ENCODE measurements at regions of chr1 and their contacts with region 1.

Region 1: GRCh38 chr1:70509996-70510876 is 99.2 kb downstream of the CTH start:
- DNase-seq: no peak
- ATAC-seq: no peak
- H3K4me3 Mint-ChIP-seq: no peak overlapping the region
- H3K27ac Mint-ChIP-seq: no peak overlapping the region
- H3K4me1 Mint-ChIP-seq: no peaks in the 10 kb centered on the region
- H3K27me3 Mint-ChIP-seq: peaks cover 13% of the 10 kb centered on the region
- CTCF ChIP-seq: no peak

Region 2: DNA sequence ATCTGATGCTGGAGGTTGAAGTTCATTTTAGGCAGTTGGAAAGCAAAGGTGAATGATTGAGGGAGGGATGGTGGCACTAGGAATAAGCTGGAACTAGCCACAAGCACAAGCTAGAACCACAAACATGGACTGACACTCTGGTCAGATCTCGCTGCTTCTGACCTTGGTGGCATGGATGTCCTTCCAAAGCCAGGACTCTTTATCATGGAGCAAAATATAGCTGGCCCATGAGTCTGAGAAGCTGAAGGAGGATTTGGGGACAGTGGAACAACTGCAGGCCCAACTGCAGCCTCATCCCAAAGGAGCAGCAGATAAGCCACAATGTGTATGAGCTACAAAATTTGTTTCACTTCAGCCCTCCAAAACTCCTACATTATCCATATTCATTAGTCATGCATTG is 253.6 kb before region 1 on chr1:
- CTCF ChIA-PET with region 1: no interaction called
- POLR2A ChIA-PET with region 1: no interaction called
- intact Hi-C with region 1: loop called (anchors 10 kb)
- DNase-seq: no peak
- ATAC-seq: no peak
- H3K4me3 Mint-ChIP-seq: no peak overlapping the region
- H3K27ac Mint-ChIP-seq: no peak overlapping the region
- H3K4me1 Mint-ChIP-seq: no peaks in the 10 kb centered on the region
- H3K27me3 Mint-ChIP-seq: no peaks in the 10 kb centered on the region
- CTCF ChIP-seq: no peak

Region 3: GRCh38 chr1:70440642-70441378 is 69.4 kb before region 1 on chr1:
- CTCF ChIA-PET with region 1: no interaction called
- POLR2A ChIA-PET with region 1: no interaction called
- intact Hi-C with region 1: no loop called
- DNase-seq: no peak
- ATAC-seq: no peak
- H3K4me3 Mint-ChIP-seq: no peak overlapping the region
- H3K27ac Mint-ChIP-seq: no peak overlapping the region
- H3K4me1 Mint-ChIP-seq: no peaks in the 10 kb centered on the region
- H3K27me3 Mint-ChIP-seq: no peaks in the 10 kb centered on the region
- CTCF ChIP-seq: no peak

Region 4: DNA sequence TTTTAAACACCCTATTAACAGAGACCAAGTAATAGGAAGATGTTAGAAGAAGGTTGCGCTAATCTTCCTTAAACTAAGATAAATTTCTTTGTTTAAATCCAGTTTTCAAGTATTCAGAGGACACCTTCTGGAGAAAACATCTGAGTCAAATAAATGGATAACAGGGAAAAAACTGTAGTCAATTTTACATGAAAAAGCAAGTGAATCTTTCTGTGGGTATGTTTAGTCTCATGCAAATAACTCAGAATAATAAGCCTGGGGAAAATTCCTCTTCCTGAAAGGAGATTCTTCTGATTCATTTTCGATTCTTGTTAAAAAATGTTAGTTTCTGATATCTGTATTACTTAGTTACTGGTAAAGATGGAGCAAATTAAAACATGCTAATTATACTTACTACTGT is 46.3 kb after region 1 on chr1:
- CTCF ChIA-PET with region 1: no interaction called
- POLR2A ChIA-PET with region 1: no interaction called
- intact Hi-C with region 1: no loop called
- DNase-seq: no peak
- ATAC-seq: no peak
- H3K4me3 Mint-ChIP-seq: no peak overlapping the region
- H3K27ac Mint-ChIP-seq: no peak overlapping the region
- H3K4me1 Mint-ChIP-seq: no peaks in the 10 kb centered on the region
- H3K27me3 Mint-ChIP-seq: no peaks in the 10 kb centered on the region
- CTCF ChIP-seq: no peak

Region 5: DNA sequence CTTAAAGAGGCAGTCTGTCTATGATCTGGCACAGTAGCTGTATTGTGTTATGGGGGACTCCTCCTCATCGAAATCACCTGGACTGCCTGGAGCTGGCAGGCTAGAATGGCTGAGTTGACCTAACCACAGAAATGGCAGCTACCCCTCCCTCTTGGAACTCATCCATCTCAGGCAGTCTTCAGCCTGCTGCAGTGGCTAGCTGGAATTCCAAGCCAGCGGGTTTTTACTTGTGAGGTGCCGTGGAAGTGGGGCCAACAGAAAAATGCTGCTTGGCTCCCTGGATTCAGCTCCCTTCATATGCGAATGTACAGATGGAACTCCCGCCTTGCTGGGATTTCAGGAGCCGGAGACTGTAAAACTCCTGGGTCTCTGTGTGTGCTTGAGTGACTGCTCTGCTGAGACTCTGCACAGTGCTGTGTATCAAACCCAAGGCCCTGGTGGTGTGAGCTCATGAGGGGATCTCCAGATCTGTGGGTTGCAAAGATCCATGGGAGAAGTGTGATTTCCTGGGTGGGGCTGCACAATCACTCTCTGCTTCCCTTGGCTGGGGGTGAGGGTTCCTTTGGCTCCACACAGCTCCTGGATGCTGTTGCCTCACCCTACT is 217.8 kb after region 1 on chr1:
- CTCF ChIA-PET with region 1: no interaction called
- POLR2A ChIA-PET with region 1: no interaction called
- intact Hi-C with region 1: no loop called
- DNase-seq: no peak
- ATAC-seq: no peak
- H3K4me3 Mint-ChIP-seq: no peak overlapping the region
- H3K27ac Mint-ChIP-seq: no peak overlapping the region
- H3K4me1 Mint-ChIP-seq: no peaks in the 10 kb centered on the region
- H3K27me3 Mint-ChIP-seq: no peaks in the 10 kb centered on the region
- CTCF ChIP-seq: no peak

Measured in activated B cell treated with CpG ODN at 0.5 μM for 24 hours (primary cell).